ENCODE measurements at regions of chr20 and their contacts with region 1.

Region 1: GRCh38 chr20:59322899-59323454 is 22.6 kb downstream of the EDN3 start:
- DNase-seq: no peak
- ATAC-seq: no peak
- H3K4me3 ChIP-seq: no peak overlapping the region
- H3K4me3 Mint-ChIP-seq: no peak overlapping the region
- H3K27ac ChIP-seq: no peak overlapping the region
- H3K27ac Mint-ChIP-seq: no peak overlapping the region
- H3K4me1 ChIP-seq: no peaks in the 10 kb centered on the region
- H3K4me1 Mint-ChIP-seq: no peaks in the 10 kb centered on the region
- H3K27me3 ChIP-seq: no peaks in the 10 kb centered on the region
- H3K27me3 Mint-ChIP-seq: no peaks in the 10 kb centered on the region
- CTCF ChIP-seq: no peak

Region 2: GRCh38 chr20:59365611-59366285 is 42.8 kb after region 1 on chr20:
- CTCF ChIA-PET with region 1: no interaction called
- POLR2A ChIA-PET with region 1: no interaction called
- intact Hi-C with region 1: loop called in 1 of 2 experiments (anchors 2 kb)
- DNase-seq: no peak
- ATAC-seq: no peak
- H3K4me3 ChIP-seq: no peak overlapping the region
- H3K4me3 Mint-ChIP-seq: no peak overlapping the region
- H3K27ac ChIP-seq: no peak overlapping the region
- H3K27ac Mint-ChIP-seq: no peak overlapping the region
- H3K4me1 ChIP-seq: no peaks in the 10 kb centered on the region
- H3K4me1 Mint-ChIP-seq: no peaks in the 10 kb centered on the region
- H3K27me3 ChIP-seq: peaks cover 0 to 2% of the 10 kb centered on the region in 2 experiments
- H3K27me3 Mint-ChIP-seq: no peaks in the 10 kb centered on the region
- CTCF ChIP-seq: no peak